ENCODE measurements at regions of chr1 and their contacts with region 1.

Region 1: DNA sequence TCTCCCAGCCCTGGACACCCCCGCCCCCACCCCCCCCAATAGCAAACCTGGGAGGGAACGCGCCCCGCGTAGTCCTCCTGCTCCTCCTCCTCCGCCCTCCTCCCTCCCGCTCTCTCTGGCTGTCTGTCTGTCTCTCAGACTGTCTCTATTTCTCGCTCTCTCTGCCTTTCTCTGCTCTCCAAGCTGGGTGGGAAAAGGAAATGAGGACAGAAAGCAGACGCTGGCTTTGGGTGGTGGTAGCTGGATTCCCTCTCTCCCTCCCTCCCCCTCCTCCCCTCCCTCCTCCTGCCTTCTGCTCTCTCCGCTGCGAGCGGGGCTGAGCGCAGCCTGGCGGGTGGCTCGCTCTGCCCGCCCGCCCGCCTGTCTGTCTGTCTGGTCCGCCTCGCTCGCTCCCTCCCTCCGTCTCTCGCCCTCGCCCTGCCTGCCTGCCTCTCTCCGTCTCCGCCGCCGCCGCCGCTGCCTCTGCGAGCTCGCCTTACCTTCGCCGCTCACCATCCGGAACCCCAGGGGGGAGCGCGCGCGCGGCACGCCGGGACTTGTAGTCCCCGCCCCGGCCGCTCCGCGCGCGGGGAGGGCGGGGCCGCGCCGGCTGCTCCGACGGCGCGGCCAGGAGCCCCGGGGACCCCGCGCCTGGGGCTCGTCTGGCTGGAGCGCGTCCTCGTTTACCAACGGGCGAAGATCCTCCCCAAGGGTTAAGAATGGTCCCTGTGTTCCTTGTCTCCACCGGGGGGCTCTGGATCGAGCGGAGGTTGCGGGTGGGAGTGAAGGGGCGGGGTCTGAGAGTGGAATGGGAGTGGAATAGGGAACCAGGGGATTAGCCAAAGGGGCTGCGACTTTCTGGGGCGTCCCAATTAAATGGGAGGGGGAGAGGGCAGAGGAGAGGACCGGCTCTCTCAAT is at the start of gene AHDC1:
- DNase-seq: peak; percentile 85 to 93 (median 90)
- ATAC-seq: peak; percentile 89
- H3K4me3 ChIP-seq: peak within 1 kb of the TSS; percentile 81
- H3K4me3 Mint-ChIP-seq: peak within 1 kb of the TSS; percentile 83 to 98 (median 91)
- H3K27ac ChIP-seq: peak within 1 kb of the TSS; percentile 84
- H3K27ac Mint-ChIP-seq: peak within 1 kb of the TSS; percentile 66 to 98 (median 90)
- H3K4me1 ChIP-seq: peaks cover 11 to 37% of the 10 kb centered on the region in 2 donors
- H3K4me1 Mint-ChIP-seq: peaks cover 40 to 49% (median 42%) of the 10 kb centered on the region in 7 donors
- H3K27me3 ChIP-seq: no peaks in the 10 kb centered on the region
- H3K27me3 Mint-ChIP-seq: no peaks in the 10 kb centered on the region
- total RNA-seq, gene AHDC1: 18.4 to 38.8 (median 21.3) TPM

Region 2: DNA sequence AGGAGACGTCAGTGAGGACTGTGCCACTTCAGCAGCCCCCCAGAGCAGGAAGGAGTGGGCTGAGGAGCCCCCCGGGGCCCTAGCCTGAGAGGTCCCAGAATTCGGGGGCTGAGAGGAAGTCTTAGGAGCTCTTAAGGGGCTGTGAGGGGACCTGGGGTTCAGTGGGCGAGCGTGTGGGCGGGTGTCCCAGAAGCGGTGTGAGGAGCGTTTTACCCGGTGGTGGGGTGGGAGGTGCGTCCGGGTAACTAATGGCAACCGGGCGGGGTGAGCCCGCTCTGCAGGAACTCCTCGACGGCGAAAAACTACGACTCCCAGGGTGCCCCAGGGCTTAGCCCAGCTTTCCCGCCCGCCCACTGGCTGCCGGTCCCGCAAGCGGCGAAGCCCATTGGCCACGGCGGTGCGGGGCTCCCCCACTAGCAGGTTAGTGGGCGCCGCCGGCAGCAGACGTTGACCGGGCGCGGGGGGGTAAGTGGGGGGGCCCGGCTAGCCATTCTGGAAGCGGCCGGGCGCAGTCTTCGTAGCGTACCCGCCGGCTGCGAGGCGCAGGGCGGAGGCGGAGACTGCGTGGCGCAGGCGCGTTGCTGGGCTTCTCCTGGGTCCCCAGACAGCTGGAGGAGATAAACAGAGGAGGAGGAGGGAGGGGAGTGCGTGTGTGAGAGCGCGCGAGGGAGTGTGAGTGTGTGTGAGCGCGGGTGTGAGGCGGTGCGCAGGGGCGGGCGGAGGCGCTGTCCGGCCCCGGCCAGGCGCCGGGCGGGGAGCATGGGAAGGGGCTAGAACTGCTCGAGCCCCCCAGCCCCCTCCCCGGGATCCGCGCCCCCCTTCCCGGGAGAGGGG is 369.7 kb before region 1 on chr1 and contains the start of gene WDTC1:
- CTCF ChIA-PET with region 1: no interaction called
- POLR2A ChIA-PET with region 1: no interaction called
- intact Hi-C with region 1: loop called in 1 of 2 experiments (anchors 1 kb)
- DNase-seq: peak; percentile 91 to 98 (median 97)
- ATAC-seq: peak; percentile 96
- H3K4me3 ChIP-seq: peak within 1 kb of the TSS; percentile 78
- H3K4me3 Mint-ChIP-seq: peak within 1 kb of the TSS; percentile 95 to 100 (median 98)
- H3K27ac ChIP-seq: peak within 1 kb of the TSS; percentile 78
- H3K27ac Mint-ChIP-seq: peak within 1 kb of the TSS; percentile 83 to 97 (median 96)
- H3K4me1 ChIP-seq: peaks cover 18 to 25% of the 10 kb centered on the region in 2 donors
- H3K4me1 Mint-ChIP-seq: peaks cover 25 to 39% (median 35%) of the 10 kb centered on the region in 7 donors
- H3K27me3 ChIP-seq: no peaks in the 10 kb centered on the region
- H3K27me3 Mint-ChIP-seq: peaks cover 0 to 3% (median 0%) of the 10 kb centered on the region in 5 donors
- total RNA-seq, gene WDTC1: 33.2 to 59.0 (median 46.3) TPM

Region 3: DNA sequence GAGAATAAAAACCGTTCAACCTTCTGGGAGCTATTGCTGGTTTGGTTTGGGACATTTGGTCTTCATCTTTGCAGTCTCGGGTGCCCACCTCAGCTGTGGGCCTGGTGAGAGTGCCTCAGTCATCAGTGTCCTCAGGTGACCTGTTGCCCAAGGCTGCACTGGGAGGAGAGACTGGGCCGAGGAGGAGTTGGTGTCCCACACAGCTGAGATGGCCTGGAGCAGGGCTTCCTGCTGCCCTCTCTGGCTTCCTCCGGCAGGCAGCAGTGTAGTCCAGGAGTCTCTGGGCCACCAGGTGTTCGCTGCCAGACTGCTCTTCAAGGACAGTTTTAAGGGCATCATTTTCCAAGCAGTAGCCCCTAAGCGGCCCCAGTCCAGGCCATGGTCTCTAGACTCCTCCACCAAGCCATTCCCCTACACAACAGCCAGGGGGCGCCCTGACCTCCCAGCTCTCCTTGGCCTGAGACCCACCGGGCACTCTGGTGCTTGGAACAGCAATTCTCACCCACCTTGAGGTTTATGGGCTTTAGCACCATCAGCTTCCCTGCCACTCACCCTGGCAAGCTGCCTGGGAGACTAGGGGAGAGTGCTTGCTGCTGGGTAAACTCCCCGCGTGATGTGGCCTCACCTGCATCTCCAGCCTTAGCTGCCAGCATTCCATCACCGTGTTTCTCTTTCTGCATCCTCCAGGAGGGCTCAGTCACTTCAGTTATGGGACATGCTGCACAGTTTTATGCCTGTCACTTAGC is 271.2 kb before region 1 on chr1:
- CTCF ChIA-PET with region 1: interaction called, 5 read pairs
- POLR2A ChIA-PET with region 1: no interaction called
- intact Hi-C with region 1: loop called (anchors 1 to 10 kb)
- DNase-seq: peak in 8 of 9 donors; percentile 49 to 71 (median 56)
- ATAC-seq: peak; percentile 90
- H3K4me3 ChIP-seq: no peak overlapping the region
- H3K4me3 Mint-ChIP-seq: no peak overlapping the region
- H3K27ac ChIP-seq: no peak overlapping the region
- H3K27ac Mint-ChIP-seq: peak overlapping the region in 5 of 9 donors; percentile 21 to 67 (median 50)
- H3K4me1 ChIP-seq: peaks cover 7 to 11% of the 10 kb centered on the region in 2 donors
- H3K4me1 Mint-ChIP-seq: peaks cover 29 to 51% (median 44%) of the 10 kb centered on the region in 7 donors
- H3K27me3 ChIP-seq: no peaks in the 10 kb centered on the region
- H3K27me3 Mint-ChIP-seq: no peaks in the 10 kb centered on the region

Region 4: DNA sequence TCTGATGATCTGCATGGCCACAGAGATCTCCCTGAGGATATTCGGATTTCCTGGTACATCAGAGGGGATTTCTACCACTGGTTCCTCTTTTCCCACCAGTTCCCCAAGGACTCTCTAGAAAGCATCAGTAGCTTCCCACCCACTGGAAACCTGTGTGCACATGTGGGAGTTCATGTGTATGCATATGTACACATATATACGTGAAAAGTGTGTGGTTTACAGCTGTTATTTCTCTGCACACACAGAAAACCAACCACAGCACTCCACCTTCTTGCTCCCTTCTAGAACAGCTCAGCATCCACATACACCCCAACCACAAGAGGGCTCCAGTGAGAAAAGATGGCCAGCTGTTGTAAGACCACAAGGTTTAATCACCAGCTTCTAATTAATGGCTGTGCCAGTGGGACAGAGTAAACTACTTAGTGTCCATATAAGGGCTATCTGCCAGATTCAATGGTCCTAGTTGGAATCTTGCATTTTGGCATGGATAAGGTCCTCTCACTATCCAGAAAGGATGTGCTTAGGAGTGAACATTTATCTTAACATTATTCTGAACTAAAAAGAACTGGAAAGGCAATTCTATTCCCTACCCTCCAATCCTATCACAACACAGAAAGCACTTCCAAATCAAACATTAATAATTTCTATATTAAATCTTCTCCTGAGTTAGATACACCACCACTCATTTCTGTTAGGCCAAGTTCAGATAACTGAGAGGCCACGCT is 187.4 kb before region 1 on chr1:
- CTCF ChIA-PET with region 1: interaction called, 24 read pairs
- POLR2A ChIA-PET with region 1: interaction called, 4 read pairs
- intact Hi-C with region 1: loop called (anchors 1 kb)
- DNase-seq: peak in 7 of 9 donors; percentile 44 to 67 (median 56)
- ATAC-seq: peak; percentile 87
- H3K4me3 ChIP-seq: no peak overlapping the region
- H3K4me3 Mint-ChIP-seq: no peak overlapping the region
- H3K27ac ChIP-seq: peak overlapping the region; percentile 10
- H3K27ac Mint-ChIP-seq: peak overlapping the region; percentile 3 to 85 (median 53)
- H3K4me1 ChIP-seq: peaks cover 0 to 11% of the 10 kb centered on the region in 2 donors
- H3K4me1 Mint-ChIP-seq: peaks cover 12 to 46% (median 35%) of the 10 kb centered on the region in 7 donors
- H3K27me3 ChIP-seq: no peaks in the 10 kb centered on the region
- H3K27me3 Mint-ChIP-seq: no peaks in the 10 kb centered on the region

Region 5: DNA sequence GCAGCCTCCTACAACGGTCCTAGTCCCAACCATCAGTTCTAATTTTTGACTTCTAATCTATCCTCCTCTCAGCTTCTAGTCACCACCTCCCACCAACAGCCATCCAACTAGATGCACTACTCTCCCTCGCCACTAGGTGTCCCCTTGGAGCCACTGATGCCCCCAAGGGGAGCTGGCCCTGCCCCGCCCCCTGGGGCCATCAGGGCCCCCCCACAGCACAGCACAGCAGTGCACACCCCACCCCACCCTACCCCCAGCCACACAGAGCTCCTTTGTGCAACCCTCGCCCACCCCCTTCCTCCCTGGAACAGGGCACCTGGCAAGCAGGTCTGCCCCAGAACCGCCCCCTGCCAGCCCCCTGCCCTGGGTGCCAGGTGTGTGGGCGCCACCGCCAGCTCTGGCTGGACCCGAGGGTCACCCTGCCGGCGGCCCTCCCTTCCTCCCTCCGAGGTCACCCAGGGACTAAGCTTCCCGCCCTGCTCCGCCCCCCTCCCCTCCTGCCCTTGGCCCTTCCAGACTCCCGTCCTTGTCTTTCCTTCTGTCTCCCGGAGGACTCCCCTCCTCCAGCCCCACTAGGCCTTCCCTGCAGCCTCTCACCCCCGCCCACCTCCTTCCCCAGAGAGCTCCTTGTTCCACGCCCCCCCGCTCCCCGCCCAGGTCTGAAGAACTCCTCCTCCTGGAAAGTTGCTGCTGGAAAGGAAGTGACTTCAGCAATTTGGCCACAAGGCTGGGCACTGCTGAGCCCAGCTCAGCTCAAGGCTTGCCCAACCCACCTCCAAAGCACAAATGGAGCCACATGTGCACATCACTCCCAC is 46.9 kb before region 1 on chr1:
- CTCF ChIA-PET with region 1: interaction called, 64 read pairs
- POLR2A ChIA-PET with region 1: interaction called, 7 read pairs
- intact Hi-C with region 1: loop called (anchors 1 kb)
- DNase-seq: peak; percentile 51 to 79 (median 65)
- ATAC-seq: peak; percentile 87
- H3K4me3 ChIP-seq: no peak overlapping the region
- H3K4me3 Mint-ChIP-seq: peak overlapping the region; percentile 14 to 88 (median 67)
- H3K27ac ChIP-seq: no peak overlapping the region
- H3K27ac Mint-ChIP-seq: peak overlapping the region; percentile 32 to 98 (median 81)
- H3K4me1 ChIP-seq: peaks cover 8 to 16% of the 10 kb centered on the region in 2 donors
- H3K4me1 Mint-ChIP-seq: peaks cover 23 to 56% (median 46%) of the 10 kb centered on the region in 7 donors
- H3K27me3 ChIP-seq: no peaks in the 10 kb centered on the region
- H3K27me3 Mint-ChIP-seq: no peaks in the 10 kb centered on the region

Region 6: DNA sequence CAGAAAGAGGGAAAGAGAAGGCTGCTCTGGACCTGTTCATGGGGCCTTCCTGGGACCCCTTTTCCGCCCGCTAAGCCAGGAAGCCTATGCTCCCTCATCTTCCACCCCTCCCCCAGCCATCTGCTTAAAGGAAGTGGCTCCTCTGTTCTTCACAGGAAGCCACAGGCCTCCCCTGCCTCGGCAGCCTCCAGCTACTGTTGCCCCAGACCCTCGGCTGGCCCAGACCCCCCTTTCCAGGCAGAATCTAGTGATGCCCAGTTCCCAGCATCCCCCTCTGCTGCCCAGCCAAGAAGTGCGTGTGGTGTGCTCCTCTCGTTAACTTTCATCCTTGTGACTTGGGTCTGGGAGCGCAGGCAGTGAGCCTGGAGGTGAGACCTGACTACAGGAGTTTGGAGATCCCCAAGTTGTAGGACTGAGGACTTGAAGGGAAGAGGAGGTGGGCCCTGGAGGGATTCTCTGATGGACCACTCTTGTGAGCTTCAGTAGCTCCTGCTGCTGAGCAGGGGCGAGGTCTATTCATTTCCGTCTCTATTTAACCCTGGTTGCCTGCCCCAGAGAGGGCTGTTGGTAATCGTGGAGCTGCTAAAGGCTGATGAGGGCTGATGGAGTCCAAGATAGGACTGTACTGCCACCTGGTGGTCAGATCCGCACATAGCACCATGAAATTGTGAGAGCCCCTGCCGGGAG is 58.9 kb after region 1 on chr1:
- CTCF ChIA-PET with region 1: interaction called, 378 read pairs
- POLR2A ChIA-PET with region 1: interaction called, 338 read pairs
- intact Hi-C with region 1: loop called (anchors 1 kb)
- DNase-seq: peak; percentile 76 to 94 (median 88)
- ATAC-seq: peak; percentile 80
- H3K4me3 ChIP-seq: peak overlapping the region; percentile 64
- H3K4me3 Mint-ChIP-seq: peak overlapping the region; percentile 82 to 94 (median 90)
- H3K27ac ChIP-seq: peak overlapping the region; percentile 81
- H3K27ac Mint-ChIP-seq: peak overlapping the region; percentile 95 to 100 (median 98)
- H3K4me1 ChIP-seq: peaks cover 38 to 46% of the 10 kb centered on the region in 2 donors
- H3K4me1 Mint-ChIP-seq: peaks cover 39 to 62% (median 48%) of the 10 kb centered on the region in 7 donors
- H3K27me3 ChIP-seq: no peaks in the 10 kb centered on the region
- H3K27me3 Mint-ChIP-seq: no peaks in the 10 kb centered on the region

Region 7: DNA sequence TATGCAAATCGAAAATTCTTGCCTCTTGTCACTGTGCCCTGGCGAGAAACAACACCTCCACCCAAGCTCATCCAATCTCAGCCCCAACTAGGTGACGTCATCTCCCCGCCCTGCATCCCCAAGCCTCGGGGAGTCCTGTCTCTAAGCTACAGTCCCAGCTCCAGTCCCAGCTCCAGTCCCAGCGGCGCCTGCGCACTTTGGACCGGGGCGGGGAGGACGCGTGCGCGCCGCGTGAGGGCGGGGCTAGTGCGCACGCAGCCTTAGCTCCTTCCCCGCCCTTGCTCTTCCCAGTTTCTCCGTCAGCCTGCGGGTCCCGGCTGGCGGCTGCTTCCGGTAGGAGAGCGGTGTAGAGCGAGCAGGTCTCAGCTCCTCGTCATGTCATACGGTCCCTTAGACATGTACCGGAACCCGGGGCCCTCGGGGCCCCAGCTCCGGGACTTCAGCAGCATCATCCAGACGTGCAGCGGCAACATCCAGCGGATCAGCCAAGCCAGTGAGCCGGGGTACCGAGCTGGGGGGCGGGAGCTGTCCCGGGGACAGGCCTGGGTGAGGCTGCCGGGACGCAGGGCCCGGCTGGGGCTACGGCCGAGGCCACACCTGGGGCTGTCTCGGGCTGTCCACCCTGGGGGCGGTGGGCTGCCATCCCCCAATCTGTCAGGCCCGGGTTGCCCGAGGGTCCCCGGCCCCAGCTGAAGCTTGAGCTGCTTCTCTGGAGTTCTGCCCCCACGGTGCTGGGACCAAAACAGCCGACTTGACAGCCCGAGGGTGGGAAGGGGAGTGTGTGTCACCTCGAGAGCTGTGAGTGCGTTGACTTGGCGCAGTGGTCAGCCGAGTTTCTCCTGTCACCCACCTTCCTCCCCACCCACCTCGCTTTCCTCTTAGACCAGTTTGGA is 169.2 kb after region 1 on chr1 and contains the start of gene STX12:
- CTCF ChIA-PET with region 1: no interaction called
- POLR2A ChIA-PET with region 1: no interaction called
- intact Hi-C with region 1: loop called in 1 of 2 experiments (anchors 5 kb)
- DNase-seq: peak; percentile 97 to 100 (median 98)
- ATAC-seq: peak; percentile 96
- H3K4me3 ChIP-seq: peak within 1 kb of the TSS; percentile 97
- H3K4me3 Mint-ChIP-seq: peak within 1 kb of the TSS; percentile 84 to 97 (median 94)
- H3K27ac ChIP-seq: peak within 1 kb of the TSS; percentile 94
- H3K27ac Mint-ChIP-seq: peak within 1 kb of the TSS; percentile 90 to 99 (median 96)
- H3K4me1 ChIP-seq: peaks cover 10 to 13% of the 10 kb centered on the region in 2 donors
- H3K4me1 Mint-ChIP-seq: peaks cover 26 to 43% (median 37%) of the 10 kb centered on the region in 7 donors
- H3K27me3 ChIP-seq: no peaks in the 10 kb centered on the region
- H3K27me3 Mint-ChIP-seq: no peaks in the 10 kb centered on the region
- total RNA-seq, gene STX12: 23.9 to 38.7 (median 28.9) TPM